Testis (tissue), 5 donors: ENCODE measurements at regions of chr17 and their contacts with region 1.

Region 1: DNA sequence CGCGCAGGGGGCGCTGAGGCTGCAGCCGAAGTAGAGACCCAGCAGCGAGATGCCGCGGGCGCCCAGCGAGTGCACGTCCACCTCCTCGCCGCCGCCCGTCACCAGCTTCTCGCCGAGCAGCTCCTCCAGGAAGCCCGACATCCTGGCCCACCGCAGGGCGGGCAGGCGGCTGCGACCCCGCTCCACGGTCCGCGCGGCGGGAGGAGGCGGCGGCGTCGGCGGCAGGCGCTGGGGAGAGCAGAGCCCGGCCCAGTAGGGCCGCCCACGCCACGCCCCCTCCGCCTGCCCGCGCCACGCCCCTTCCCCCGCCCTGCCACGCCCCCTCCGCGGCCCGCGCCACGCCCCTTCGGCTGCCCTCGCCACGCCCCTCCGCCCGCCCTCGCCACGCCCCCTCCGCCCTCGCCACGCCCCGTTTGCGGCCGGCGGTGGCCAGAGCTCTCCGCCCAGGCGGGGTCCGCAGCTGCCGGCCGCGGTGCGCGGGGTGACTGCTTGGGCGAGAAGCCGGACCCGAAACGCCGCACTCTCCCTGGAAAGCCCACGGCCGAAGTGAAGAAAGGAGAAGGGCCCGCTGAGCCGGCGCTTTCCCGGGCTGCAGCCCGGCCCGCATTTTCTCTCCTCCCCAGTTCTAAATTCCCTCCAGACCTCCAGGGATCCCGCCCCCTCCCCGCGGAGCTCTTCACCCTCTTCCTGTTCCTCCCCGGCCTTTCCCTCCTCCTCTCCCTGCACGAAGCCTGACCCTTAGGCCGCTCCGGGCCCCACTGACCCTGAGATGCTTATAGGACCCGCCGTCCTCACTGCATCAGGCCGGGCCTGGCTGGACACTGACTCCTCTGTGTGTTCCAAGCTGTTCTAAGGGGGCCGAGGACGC is at the start of gene NXN:
- DNase-seq: peak; percentile 93
- H3K4me3 ChIP-seq: peak within 1 kb of the TSS; percentile 61 to 72
- H3K27ac ChIP-seq: peak within 1 kb of the TSS; percentile 77
- H3K4me1 ChIP-seq: peaks cover 13% of the 10 kb centered on the region
- H3K27me3 ChIP-seq: no peaks in the 10 kb centered on the region
- CTCF ChIP-seq: peak in 1 of 3 experiments; percentile 11
- POLR2A ChIP-seq: no peak
- total RNA-seq, gene NXN: 22.9 to 26.0 TPM

Region 2: GRCh38 chr17:794876-795275 is 184.9 kb before region 1 on chr17:
- intact Hi-C with region 1: loop called (anchors 5 kb)
- DNase-seq: peak; percentile 89
- H3K4me3 ChIP-seq: no peak overlapping the region
- H3K27ac ChIP-seq: peak overlapping the region in 1 of 2 donors; percentile 32
- H3K4me1 ChIP-seq: peaks cover 3% of the 10 kb centered on the region
- H3K27me3 ChIP-seq: no peaks in the 10 kb centered on the region
- CTCF ChIP-seq: peak; percentile 63 to 84 (median 82)
- POLR2A ChIP-seq: no peak

Region 3: DNA sequence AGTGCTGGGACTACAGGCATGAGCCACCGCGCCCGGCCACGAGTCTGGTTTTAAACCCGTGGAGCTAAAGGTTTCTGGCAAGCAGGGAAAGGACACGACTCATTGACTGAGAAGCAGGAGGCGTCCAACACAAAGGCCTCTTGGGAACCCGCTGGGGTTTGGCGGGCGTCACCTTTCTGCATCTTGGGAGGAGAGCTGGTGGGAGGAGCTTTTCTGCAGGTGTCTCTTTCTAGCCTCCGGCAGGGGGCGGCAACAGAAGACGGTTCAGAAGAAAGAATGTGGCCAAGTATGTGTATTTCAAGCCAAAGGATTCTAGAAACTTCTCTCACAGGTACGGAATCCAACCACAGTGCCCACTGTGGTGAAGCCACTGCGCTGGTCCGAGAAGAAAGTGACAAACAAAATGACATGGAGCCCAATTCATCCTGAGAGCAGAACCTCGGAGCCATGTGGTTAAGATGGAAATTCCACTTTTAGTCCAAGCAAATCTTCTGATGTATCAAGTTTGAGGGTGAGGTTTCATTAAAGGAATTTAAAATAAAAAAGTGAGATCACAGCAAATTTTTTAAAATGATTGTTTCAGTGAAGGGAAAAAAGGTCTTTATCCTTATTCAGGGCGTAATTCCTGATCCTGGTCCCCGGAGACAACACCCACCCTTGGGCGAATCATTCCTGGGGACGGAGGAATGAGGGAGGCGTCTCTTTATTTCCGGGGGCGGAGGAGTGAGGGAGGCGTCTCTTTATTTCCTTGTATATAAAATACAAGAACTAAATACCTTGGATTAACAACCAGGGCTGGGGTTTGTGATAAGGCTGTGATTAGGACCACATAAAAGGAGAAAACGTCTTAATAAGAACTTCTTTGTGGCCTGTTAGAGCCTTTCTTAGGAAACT is 100.0 kb before region 1 on chr17:
- intact Hi-C with region 1: loop called (anchors 10 kb)
- DNase-seq: peak; percentile 83
- H3K4me3 ChIP-seq: no peak overlapping the region
- H3K27ac ChIP-seq: peak overlapping the region; percentile 68 to 85
- H3K4me1 ChIP-seq: peaks cover 38% of the 10 kb centered on the region
- H3K27me3 ChIP-seq: no peaks in the 10 kb centered on the region
- CTCF ChIP-seq: peak; percentile 48 to 62 (median 50)
- POLR2A ChIP-seq: no peak

Region 4: GRCh38 chr17:915538-916201 is 64.1 kb before region 1 on chr17:
- intact Hi-C with region 1: no loop called
- DNase-seq: no peak
- H3K4me3 ChIP-seq: no peak overlapping the region
- H3K27ac ChIP-seq: peak overlapping the region; percentile 25 to 67
- H3K4me1 ChIP-seq: no peaks in the 10 kb centered on the region
- H3K27me3 ChIP-seq: no peaks in the 10 kb centered on the region
- CTCF ChIP-seq: no peak
- POLR2A ChIP-seq: no peak

Region 5: DNA sequence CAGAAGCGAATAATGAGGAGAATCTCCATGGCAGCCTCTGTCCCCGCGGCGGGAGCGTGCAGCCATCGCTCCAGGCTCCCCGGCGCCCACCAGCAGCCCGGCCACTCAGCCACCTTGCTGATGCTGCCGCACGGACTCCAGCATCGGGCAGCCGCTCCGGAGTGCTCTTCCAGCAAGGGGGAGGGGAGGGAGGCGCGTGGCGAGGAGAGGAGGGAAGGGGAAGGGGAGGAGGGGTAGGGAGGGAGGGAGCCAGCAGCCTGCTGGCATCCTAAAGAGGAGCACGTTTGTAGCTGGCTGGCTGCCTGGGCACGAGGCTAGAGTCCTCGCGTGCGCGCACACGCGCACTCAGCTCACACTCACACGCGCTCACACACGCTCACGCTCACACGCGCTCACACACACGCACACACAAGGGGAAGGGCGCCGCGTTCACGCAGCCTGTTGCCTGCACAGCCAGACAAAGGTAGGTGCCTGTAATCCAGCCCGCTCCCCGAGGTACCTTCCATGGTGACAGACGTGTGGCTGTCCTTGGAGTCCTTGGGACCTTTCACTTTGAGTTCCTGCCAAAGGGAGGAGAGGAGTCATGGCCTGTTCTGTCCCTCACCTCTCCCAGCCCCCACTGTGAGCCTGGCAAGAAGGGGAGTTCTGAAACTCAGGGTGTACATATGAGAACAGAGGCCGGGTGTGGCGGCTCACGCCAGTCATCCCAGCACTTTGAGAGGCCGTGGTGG is 99.2 kb after region 1 on chr17:
- intact Hi-C with region 1: no loop called
- DNase-seq: no peak
- H3K4me3 ChIP-seq: no peak overlapping the region
- H3K27ac ChIP-seq: no peak overlapping the region
- H3K4me1 ChIP-seq: no peaks in the 10 kb centered on the region
- H3K27me3 ChIP-seq: no peaks in the 10 kb centered on the region
- CTCF ChIP-seq: no peak
- POLR2A ChIP-seq: no peak